Stomach (tissue), 19 donors: ENCODE measurements at regions of chr5 and their contacts with region 1.

Region 1: DNA sequence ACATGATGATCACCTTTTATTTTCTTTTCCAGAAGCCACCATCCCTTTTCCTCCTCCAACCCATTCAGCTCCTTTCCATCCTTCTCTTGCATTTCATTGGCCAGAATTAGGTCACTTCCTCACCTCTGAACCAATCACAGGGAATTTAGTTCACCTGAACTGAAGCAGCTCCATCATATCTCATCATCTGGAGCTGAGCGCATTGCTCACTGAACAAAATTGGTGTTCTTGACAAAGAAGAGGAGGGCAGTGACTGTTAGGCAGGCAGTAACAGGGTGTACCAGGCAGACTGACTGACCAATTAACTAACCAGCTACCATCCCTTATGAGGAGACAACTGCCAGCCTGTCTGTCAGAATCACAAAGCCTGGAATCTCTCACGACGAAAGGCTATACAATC is 1.8 kb upstream of the ZNF354A start:
- DNase-seq: no peak
- H3K4me3 ChIP-seq: no peak overlapping the region
- H3K27ac ChIP-seq: no peak overlapping the region
- H3K4me1 ChIP-seq: peaks cover 0 to 11% (median 5%) of the 10 kb centered on the region in 4 donors
- H3K27me3 ChIP-seq: no peaks in the 10 kb centered on the region
- CTCF ChIP-seq: no peak
- EP300 ChIP-seq: no peak
- POLR2A ChIP-seq: no peak

Region 2: GRCh38 chr5:178859625-178860531 is 127.6 kb after region 1 on chr5 and contains the start of gene ZNF354B:
- intact Hi-C with region 1: loop called (anchors 5 kb)
- DNase-seq: peak; percentile 93 to 97
- H3K4me3 ChIP-seq: peak within 1 kb of the TSS; percentile 70 to 94 (median 90)
- H3K27ac ChIP-seq: peak within 1 kb of the TSS; percentile 78 to 93 (median 86)
- H3K4me1 ChIP-seq: peaks cover 8 to 28% (median 17%) of the 10 kb centered on the region in 4 donors
- H3K27me3 ChIP-seq: no peaks in the 10 kb centered on the region
- CTCF ChIP-seq: peak in 1 of 7 experiments; percentile 6
- EP300 ChIP-seq: no peak
- POLR2A ChIP-seq: no peak
- total RNA-seq, gene ZNF354B: 7.5 to 39.7 (median 23.3) TPM

Region 3: DNA sequence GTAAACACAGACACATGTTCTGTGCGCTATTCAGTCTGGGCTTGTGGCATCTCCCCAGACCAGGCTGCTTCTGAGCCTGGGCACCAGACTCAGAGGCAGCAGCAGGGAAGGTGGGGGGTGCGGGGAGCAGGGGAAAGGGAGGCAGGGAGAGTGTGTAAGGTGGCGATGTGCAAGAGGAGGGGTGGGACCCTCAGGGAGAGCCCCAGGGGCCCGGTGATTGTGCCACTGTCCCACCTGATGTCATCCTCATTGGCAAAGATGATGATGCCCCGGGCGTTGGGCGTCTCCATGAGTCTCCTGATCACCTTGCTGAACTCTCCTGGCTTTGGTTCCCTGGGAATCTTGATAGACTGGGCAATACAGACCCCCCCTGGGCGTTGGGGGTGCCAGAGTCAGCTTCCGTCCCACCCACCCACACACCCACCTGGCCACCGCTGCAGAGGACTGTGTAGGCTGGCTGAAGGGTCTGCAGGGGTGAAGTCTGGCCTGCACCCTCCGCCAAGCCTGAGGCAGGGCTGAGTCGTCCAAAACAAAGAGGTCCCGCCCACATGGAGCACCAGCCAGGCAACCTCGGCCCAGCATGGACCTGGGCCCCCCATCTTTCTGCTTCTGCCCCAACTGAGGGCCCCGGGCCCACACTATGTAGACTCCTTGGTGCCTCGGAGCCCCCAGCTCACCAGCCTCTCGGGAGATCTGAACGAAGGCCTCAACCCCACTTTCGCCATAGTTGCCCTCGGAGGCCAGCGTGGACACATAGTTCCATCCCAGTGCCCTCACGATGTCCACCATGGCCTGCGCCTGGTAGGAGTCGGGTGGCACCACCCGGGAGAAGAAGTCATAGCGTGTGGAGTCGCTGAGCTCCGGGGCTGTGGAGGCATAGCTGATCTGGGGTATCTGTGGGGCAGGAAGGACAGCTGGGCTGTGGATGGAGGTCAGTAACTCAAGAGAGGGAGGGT is 259.2 kb after region 1 on chr5:
- intact Hi-C with region 1: no loop called
- DNase-seq: no peak
- H3K4me3 ChIP-seq: no peak overlapping the region
- H3K27ac ChIP-seq: no peak overlapping the region
- H3K4me1 ChIP-seq: peaks cover 0 to 6% (median 2%) of the 10 kb centered on the region in 4 donors
- H3K27me3 ChIP-seq: peaks cover 0 to 51% (median 24%) of the 10 kb centered on the region in 3 donors
- CTCF ChIP-seq: no peak
- EP300 ChIP-seq: no peak
- POLR2A ChIP-seq: no peak

Region 4: GRCh38 chr5:179051784-179052183 is 319.5 kb after region 1 on chr5:
- intact Hi-C with region 1: loop called (anchors 10 kb)
- DNase-seq: no peak
- H3K4me3 ChIP-seq: no peak overlapping the region
- H3K27ac ChIP-seq: no peak overlapping the region
- H3K4me1 ChIP-seq: no peaks in the 10 kb centered on the region
- H3K27me3 ChIP-seq: no peaks in the 10 kb centered on the region
- CTCF ChIP-seq: no peak
- EP300 ChIP-seq: no peak
- POLR2A ChIP-seq: no peak

Region 5: DNA sequence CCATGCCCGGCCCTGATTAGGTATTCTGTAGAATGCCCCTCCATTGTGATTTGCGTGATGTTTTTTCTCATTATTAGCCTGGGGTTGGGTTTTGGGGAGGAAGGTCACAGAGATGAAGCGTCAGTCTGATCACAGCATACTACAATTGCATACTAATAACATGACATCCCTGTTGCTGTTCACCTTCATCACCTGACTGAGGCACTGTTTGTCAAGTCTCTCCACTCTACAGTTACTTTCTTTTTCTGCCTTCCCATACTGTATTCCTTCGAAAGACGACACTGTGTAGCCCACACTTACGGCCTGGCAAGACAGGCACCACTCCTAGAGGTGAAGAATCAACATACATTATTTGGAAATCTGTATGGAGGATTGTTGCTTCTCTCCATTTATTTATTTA is 333.4 kb after region 1 on chr5:
- intact Hi-C with region 1: no loop called
- DNase-seq: no peak
- H3K4me3 ChIP-seq: no peak overlapping the region
- H3K27ac ChIP-seq: no peak overlapping the region
- H3K4me1 ChIP-seq: peaks cover 9 to 14% (median 12%) of the 10 kb centered on the region in 4 donors
- H3K27me3 ChIP-seq: no peaks in the 10 kb centered on the region
- CTCF ChIP-seq: no peak
- EP300 ChIP-seq: no peak
- POLR2A ChIP-seq: no peak